MCF 10A (cell line): ENCODE measurements at regions of chr3 and their contacts with region 1.

Region 1: DNA sequence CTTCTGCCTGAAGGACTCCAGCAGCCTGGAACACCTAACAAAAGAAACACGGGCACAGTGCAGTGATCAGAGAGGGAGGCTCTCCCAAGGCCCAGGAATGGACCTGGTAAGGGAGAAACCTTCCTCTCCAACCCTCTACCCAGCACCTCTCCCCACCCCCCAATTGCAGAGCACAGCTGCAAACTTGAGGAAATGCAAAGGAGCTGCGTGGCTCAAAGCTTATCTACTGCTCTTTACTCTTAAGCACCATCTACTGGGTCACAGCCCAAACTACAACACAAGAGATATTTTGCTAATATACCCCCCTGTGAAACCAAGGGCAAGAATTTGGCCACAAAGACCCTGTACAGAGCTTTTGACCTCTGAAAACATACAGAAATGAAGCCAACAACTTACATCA is 328.3 kb downstream of the OXSM start:
- DNase-seq: peak; percentile 4
- H3K4me3 Mint-ChIP-seq: no peak overlapping the region
- H3K27ac Mint-ChIP-seq: no peak overlapping the region
- H3K4me1 Mint-ChIP-seq: no peaks in the 10 kb centered on the region
- H3K27me3 Mint-ChIP-seq: no peaks in the 10 kb centered on the region
- CTCF ChIP-seq: peak; percentile 51

Region 2: GRCh38 chr3:25904206-25904605 is 214.0 kb before region 1 on chr3:
- CTCF ChIA-PET with region 1: no interaction called
- POLR2A ChIA-PET with region 1: no interaction called
- intact Hi-C with region 1: loop called (anchors 2 kb)
- DNase-seq: peak; percentile 24
- H3K4me3 Mint-ChIP-seq: no peak overlapping the region
- H3K27ac Mint-ChIP-seq: no peak overlapping the region
- H3K4me1 Mint-ChIP-seq: peaks cover 4% of the 10 kb centered on the region
- H3K27me3 Mint-ChIP-seq: no peaks in the 10 kb centered on the region
- CTCF ChIP-seq: no peak

Region 3: GRCh38 chr3:25971736-25972135 is 146.4 kb before region 1 on chr3:
- CTCF ChIA-PET with region 1: no interaction called
- POLR2A ChIA-PET with region 1: no interaction called
- intact Hi-C with region 1: no loop called
- DNase-seq: no peak
- H3K4me3 Mint-ChIP-seq: no peak overlapping the region
- H3K27ac Mint-ChIP-seq: no peak overlapping the region
- H3K4me1 Mint-ChIP-seq: no peaks in the 10 kb centered on the region
- H3K27me3 Mint-ChIP-seq: no peaks in the 10 kb centered on the region
- CTCF ChIP-seq: no peak

Region 4: DNA sequence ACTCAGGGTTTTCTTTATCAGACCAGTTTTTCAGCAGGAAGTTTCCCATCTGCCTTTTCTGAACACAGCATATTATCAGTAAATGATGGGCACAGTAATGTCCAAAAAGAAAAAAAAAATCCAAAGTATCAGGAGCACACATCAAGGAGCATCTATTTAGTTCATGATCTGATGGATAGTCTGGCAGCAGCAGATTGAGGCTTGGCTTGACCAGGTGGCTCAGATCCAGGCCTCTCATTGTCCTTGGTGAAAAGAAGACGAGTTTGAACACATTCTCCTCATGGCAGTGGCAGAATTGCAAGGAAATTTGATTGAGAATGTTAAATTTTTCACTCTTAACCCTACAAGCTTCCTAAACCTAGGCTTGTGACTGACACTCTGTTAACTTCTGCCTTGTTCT is 135.4 kb before region 1 on chr3:
- CTCF ChIA-PET with region 1: interaction called, 10 read pairs
- POLR2A ChIA-PET with region 1: no interaction called
- intact Hi-C with region 1: no loop called
- DNase-seq: no peak
- H3K4me3 Mint-ChIP-seq: no peak overlapping the region
- H3K27ac Mint-ChIP-seq: no peak overlapping the region
- H3K4me1 Mint-ChIP-seq: no peaks in the 10 kb centered on the region
- H3K27me3 Mint-ChIP-seq: no peaks in the 10 kb centered on the region
- CTCF ChIP-seq: no peak

Region 5: DNA sequence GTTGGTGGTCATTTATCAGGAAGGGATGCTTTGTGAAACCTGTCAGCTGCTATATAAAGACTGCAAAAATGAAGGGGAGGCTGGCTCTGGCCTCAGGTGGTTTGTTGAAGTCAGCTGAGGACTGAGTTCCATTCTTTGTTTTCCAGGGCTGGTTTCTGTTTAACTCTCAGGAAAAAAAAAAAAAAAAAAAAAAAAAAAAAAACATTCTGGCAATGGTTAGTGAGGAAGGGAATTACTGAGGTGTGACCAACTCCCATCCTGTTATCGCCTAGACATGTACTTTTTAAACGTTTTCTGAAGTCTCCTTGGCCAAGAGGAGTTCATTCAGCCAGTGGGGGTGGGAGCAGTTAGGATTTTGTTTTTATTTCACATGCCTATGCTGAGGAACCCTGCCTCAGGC is 11.9 kb before region 1 on chr3:
- CTCF ChIA-PET with region 1: interaction called, 22 read pairs
- POLR2A ChIA-PET with region 1: interaction called, 4 read pairs
- intact Hi-C with region 1: no loop called
- DNase-seq: peak; percentile 7
- H3K4me3 Mint-ChIP-seq: no peak overlapping the region
- H3K27ac Mint-ChIP-seq: no peak overlapping the region
- H3K4me1 Mint-ChIP-seq: peaks cover 24% of the 10 kb centered on the region
- H3K27me3 Mint-ChIP-seq: no peaks in the 10 kb centered on the region
- CTCF ChIP-seq: no peak